Naive thymus-derived CD8-positive, alpha-beta T cell (primary cell): ENCODE measurements at regions of chr7 and their contacts with region 1.

Region 1: DNA sequence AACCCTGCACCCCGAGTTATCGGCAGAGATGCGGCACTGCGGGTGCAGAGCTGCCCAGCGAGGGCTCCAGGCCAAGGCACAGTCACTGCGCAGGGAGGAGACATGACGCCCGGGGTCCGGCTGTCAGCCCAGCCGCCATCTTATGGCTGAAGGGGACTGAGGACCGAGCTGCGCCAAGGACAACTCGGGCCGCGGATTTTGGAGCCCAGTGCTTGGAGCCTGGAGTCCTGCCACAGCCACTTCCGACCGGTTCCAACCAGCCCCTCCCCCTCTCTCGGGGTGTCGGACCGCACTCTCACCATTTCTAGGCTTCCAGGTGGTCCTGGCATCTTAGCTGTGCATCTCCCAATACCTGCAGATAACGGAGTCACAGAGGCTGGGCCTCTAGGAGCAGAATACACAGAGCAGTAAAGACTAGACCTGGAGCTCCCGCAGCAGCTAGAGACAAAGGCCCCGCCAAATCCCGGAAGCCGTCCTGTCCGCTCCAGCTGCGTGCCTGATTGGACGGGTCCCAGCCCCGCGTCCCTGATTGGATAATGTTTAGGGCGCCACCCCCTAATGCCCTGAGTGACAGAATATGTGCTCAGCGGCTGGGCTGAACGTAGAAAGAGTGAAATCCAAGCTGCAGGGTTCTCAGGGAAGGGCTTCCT is at the start of gene ZNF680:
- DNase-seq: peak; percentile 71 to 94 (median 88)
- ATAC-seq: peak; percentile 96 to 98
- H3K4me3 Mint-ChIP-seq: peak within 1 kb of the TSS; percentile 99 to 100 (median 100)
- H3K27ac Mint-ChIP-seq: peak within 1 kb of the TSS; percentile 95 to 99 (median 98)
- H3K4me1 Mint-ChIP-seq: peaks cover 10 to 42% (median 29%) of the 10 kb centered on the region in 4 donors
- H3K27me3 Mint-ChIP-seq: no peaks in the 10 kb centered on the region
- polyA plus RNA-seq, gene ZNF680: 7.1 to 9.7 (median 8.7) TPM

Region 2: GRCh38 chr7:64307254-64308015 is 255.3 kb before region 1 on chr7:
- POLR2A ChIA-PET with region 1: interaction called, 10 read pairs
- DNase-seq: peak; percentile 80 to 96 (median 93)
- ATAC-seq: peak; percentile 98
- H3K4me3 Mint-ChIP-seq: peak overlapping the region; percentile 91 to 99 (median 96)
- H3K27ac Mint-ChIP-seq: peak overlapping the region; percentile 95 to 99 (median 98)
- H3K4me1 Mint-ChIP-seq: peaks cover 8 to 42% (median 23%) of the 10 kb centered on the region in 4 donors
- H3K27me3 Mint-ChIP-seq: no peaks in the 10 kb centered on the region

Region 3: DNA sequence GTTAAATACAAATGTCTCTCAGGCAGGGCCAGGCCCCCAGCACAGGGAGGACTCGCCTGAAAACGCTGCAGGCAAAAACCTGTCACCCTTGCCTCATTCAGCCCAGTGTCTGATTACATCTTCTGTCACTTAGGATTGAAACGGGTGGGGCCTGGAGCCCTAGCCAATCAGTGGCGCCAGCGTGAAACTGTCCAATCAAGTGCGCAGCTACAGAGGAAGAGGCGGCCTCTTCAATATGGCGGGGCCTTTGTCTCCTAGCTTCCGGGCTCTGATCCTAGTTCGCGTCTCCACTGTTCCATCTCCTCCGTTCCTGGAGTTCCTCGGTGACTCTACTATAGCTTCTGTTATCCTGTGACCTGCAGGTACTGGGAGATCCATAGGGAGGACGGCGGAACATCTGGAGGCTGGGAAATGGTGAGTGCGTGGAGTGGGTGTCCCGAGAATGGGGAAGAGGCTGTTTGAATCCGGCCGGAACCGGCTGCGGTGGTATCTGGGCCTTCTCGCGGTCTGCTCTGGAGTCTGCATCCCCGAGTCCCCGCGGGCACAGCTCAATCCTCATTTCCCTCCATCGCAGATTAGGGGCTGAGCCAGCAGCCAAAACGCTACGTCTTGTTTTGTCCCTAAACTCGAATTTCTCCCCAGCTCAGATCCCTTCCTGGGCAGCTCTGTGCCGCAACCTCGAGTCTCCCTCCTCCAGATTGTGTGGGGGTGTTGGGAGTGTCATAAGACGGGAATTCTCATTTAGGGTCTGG is 248.8 kb before region 1 on chr7 and contains the start of gene ZNF736:
- POLR2A ChIA-PET with region 1: interaction called, 12 read pairs
- DNase-seq: peak; percentile 66 to 94 (median 86)
- ATAC-seq: peak; percentile 99 to 100
- H3K4me3 Mint-ChIP-seq: peak within 1 kb of the TSS; percentile 93 to 99 (median 98)
- H3K27ac Mint-ChIP-seq: peak within 1 kb of the TSS; percentile 91 to 100 (median 98)
- H3K4me1 Mint-ChIP-seq: peaks cover 10 to 44% (median 40%) of the 10 kb centered on the region in 4 donors
- H3K27me3 Mint-ChIP-seq: no peaks in the 10 kb centered on the region
- polyA plus RNA-seq, gene ZNF736: 2.2 to 4.9 (median 2.3) TPM

Region 4: DNA sequence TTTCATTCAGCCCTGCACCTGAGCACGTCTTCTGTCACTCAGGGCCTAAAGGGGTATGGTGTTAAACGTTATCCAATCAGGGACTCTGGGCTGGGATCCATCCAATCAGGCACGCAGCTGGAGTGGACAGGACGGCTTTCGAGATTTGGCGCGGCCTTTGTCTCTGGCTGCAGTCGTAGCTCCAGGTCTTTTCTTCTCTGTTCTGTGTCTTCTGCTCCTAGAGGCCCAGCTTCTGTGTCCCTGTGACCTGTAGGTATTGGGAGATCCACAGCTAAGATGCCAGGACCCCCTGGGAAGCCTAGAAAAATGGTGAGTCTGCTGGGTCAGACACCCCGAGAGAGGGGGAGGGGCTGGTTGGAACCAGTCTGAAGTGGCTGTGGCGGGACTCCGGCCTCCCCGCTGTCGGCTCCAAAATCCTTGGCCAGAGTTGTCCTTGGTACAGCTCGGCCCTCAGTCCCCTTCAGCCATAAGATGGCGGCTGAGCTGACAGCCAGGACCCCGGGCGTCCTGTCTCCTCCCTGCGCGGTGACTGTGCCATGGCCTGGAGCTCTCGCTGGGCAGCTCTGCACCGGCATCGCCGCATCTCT is 11.9 kb after region 1 on chr7:
- POLR2A ChIA-PET with region 1: no interaction called
- DNase-seq: no peak
- ATAC-seq: no peak
- H3K4me3 Mint-ChIP-seq: peak overlapping the region in 3 of 10 donors; percentile 14 to 46 (median 31)
- H3K27ac Mint-ChIP-seq: peak overlapping the region in 1 of 10 donors; percentile 14
- H3K4me1 Mint-ChIP-seq: peaks cover 5 to 9% (median 6%) of the 10 kb centered on the region in 4 donors
- H3K27me3 Mint-ChIP-seq: peaks cover 0 to 16% (median 8%) of the 10 kb centered on the region in 5 donors

Region 5: DNA sequence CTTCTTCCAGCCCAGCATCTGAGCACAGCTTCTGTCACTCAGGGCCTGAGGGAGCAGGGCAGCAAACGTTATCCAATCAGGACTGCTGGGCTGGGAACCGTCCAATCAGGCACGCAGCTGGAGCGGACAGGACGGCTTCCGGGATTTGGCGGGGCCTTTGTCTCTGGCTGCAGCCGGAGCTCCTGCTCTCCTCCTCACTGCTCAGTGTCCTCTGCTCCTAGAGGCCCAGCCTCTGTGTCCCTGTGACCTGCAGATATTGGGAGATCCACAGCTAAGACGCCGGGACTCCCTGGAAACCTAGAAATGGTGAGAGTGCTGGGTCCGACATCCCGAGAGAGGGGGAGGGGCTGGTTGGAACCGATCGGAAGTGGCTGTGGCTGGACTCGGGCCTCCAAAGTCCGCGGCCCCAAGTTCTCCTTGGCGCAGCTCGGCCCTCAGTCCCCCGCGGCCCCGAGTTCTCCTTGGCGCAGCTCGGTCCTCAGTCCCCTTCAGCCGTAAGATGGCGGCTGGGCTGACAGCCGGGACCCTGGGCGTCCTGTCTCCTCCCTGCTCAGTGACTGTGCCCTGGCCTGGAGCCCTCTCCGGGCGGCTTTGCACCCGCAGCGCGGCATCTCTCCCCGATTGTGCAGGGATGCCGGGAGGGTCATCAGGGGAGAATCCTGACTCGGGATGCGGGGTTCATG is 103.4 kb after region 1 on chr7 and contains the start of gene ZNF107:
- POLR2A ChIA-PET with region 1: interaction called, 14 read pairs
- DNase-seq: peak; percentile 58 to 94 (median 83)
- ATAC-seq: peak; percentile 95 to 97
- H3K4me3 Mint-ChIP-seq: peak within 1 kb of the TSS; percentile 94 to 99 (median 96)
- H3K27ac Mint-ChIP-seq: peak within 1 kb of the TSS; percentile 96 to 99 (median 98)
- H3K4me1 Mint-ChIP-seq: peaks cover 28 to 66% (median 54%) of the 10 kb centered on the region in 4 donors
- H3K27me3 Mint-ChIP-seq: no peaks in the 10 kb centered on the region
- polyA plus RNA-seq, gene ZNF107: 9.7 to 12.8 (median 11.7) TPM

Region 6: DNA sequence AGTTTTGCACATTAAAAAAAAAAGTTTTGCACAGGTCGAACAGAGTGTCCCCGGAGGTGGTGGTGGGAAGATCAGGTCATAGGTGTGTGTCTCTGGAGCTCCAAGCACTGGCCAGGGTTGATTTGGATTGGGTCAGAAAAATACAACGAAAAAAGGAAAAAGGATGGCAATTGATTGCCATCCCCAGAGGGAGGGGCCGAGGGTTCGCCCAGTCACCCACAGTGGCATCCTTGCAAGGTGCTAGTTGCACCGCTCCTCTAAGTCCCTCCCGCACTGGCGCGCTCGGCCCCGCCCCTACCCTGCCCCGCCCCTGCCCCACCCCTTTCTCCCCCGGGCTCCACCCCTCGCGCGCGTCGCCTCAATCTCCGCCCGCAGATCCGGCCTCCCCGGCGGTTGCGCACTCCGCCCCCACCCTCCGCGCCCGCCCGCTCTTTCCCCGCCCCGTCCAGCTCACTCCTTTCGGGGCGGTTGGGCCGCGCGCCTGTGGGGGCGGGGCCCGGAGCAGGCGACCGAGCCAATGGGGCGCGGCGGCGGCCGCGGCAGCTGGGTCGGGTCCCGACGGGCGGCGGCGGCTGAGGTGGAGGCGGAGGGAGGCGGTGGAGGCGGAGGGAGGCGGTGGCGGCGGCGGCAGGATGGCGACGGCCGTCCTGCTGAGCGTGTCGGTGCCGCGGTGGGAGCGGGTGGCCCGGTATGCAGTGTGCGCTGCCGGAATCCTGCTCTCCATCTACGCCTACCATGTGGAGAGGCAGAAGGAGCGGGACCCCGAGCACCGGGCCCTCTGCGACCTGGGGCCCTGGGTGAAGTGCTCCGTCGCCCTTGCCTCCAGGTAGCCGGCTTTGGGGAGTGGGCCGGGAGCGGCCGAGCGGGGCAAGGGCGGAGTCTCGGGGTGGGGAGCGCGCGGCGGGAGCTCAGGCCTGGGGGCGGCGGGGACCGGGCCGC is 475.3 kb after region 1 on chr7:
- POLR2A ChIA-PET with region 1: interaction called, 11 read pairs
- DNase-seq: peak; percentile 77 to 95 (median 91)
- ATAC-seq: peak; percentile 86
- H3K4me3 Mint-ChIP-seq: peak overlapping the region; percentile 70 to 89 (median 76)
- H3K27ac Mint-ChIP-seq: peak overlapping the region; percentile 57 to 92 (median 86)
- H3K4me1 Mint-ChIP-seq: peaks cover 6 to 20% (median 13%) of the 10 kb centered on the region in 4 donors
- H3K27me3 Mint-ChIP-seq: no peaks in the 10 kb centered on the region